HEK293T (cell line): ENCODE measurements at regions of chr5 and their contacts with region 1.

Region 1: GRCh38 chr5:139293504-139294373 is at the start of gene MATR3:
- DNase-seq: peak; percentile 92

Region 2: DNA sequence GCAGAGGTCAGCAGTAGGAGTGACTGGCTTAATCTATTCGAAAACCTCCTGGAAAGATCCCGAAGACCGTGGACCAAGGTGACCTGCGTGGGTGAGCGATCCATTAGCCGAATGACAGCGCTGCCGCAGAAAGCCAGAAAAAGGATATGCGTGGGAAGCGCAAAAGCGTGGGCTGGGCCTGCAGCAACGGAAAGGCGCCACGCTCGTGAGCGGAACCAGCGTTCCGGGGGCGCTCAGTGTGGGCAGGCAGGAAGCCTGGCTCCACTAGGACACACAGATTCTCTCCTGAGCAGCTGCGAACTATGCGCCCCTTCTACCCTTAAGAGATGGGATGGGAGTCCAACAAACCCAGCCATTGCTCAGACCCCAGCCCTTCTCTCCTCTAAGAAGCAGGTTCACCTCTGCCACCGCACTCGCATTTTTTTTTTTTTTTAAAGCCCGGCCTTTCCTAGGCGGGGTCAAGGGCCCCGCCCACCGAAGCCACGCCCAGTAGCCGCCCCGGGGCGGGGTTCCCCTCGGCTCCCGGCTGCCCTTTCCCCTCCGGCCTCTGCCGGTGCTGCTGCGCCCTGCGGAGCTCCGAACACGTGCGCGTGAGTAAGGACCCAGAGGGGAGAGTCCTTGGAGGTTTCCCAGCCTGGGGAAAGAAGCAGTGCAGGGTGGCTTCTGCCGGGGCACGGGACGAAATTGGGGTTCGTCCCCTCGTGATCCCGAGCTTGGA is 20.0 kb before region 1 on chr5:
- CTCF ChIA-PET with region 1: no interaction called
- POLR2A ChIA-PET with region 1: interaction called, 62 read pairs
- DNase-seq: peak; percentile 96

Region 3: DNA sequence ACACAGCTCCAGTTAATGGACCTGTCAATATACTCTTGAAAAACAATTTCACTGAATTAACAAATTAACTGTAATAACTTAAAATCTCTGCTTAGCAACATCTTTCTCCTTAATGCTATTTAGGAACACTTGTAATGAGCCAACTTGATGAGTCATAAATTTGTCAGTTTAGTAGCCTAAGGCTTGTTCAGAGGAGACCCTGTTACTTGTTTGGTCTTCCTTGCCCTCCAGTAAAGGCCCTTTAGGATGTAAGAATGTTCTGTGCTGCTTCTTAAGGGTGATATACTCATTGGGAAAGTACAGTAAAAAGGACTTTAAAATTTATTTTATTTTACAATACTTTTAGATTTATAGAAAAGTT is 11.6 kb before region 1 on chr5:
- CTCF ChIA-PET with region 1: interaction called, 3 read pairs
- POLR2A ChIA-PET with region 1: interaction called, 62 read pairs
- DNase-seq: no peak